ENCODE measurements at regions of chr7 and their contacts with region 1.

Region 1: DNA sequence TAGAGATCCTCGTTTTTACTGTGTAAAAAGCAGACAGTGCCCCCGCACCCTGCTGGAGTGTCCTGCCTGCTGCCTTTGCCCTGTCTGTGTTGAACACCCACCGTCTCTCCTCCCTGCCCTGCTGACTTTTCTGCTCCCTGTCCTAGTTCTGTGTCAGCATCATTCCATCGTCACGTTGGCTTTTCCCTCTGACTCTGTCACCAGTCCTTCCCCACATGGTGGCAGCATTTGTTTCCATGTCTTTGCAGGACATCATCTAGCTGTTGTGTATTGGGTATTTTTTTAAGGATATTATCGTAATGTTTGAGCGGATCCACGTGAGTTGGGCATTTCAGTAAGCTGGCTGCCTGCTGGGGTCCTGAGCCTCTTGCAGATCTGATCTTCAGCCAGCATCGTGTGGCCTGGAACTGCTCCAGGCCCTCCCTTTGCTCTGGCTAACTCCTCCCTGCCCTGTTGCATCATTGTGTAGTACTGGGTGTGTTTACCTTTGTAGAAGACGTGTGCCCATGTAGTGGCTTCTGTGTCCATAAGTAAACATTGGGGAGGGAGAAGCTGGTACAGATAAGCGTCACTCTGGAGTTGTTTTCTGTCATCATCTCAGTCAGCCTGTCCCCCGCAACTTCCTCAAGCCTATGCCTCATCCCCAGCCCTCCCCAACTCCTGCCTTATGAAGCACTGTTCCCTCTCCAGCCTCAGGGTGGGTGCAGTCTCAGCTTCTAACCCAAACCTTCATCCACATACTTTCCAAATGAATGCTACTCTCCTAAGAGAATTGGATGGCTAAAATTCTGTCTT is 44.3 kb downstream of the TRRAP start:
- DNase-seq: peak in 4 of 10 donors; percentile 21 to 31 (median 26)

Region 2: GRCh38 chr7:98935811-98936210 is 13.2 kb after region 1 on chr7:
- intact Hi-C with region 1: no loop called
- DNase-seq: no peak

Region 3: GRCh38 chr7:99040104-99040958 is 117.7 kb after region 1 on chr7:
- intact Hi-C with region 1: loop called (anchors 10 kb)
- DNase-seq: peak; percentile 70 to 97 (median 85)

Region 4: DNA sequence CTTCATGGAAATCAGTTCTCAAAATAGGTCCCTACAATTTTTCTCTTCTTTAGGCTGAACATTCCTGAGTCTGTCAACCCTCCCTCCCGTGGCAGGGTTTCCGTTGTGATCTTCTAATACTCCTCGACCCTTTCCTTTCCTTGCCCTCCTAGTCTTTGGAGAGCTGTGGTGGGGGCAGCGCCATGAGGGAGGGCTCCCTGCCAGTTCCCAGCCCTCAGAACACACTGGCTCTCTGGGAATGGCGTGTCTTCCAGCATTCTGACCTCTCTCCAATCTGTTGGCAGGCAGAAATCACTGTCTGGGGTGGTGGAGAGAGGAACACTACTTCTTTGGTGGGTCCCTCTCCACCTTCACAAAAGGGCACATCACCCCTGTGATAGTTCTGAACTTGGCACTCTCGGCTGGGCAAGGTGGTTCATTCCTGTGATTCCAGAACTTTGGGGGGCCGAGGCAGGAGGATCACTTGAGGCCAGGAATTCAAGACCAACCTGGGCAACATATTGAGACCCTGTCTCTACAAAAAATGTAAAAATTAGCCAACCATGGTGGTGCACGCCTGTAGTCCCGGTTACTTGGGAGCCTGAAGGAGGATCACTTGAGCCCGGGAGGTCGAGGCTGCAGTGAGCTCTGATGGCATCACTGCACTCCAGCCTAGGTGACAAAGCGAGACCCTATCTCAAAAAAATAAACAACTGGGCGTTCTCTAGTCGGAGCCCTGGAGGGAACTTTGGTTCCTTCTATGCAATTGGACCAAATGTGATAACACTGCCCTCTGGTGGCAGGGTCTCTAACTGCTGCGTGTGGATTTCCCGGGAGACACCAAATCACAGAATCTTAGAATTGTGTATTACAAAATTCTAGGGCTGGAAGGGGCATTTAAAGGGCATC is 390.0 kb after region 1 on chr7:
- intact Hi-C with region 1: loop called (anchors 10 kb)
- DNase-seq: peak in 8 of 10 donors; percentile 54 to 93 (median 77)

Measured in posterior cingulate gyrus (tissue), 11 donors.